BJ (cell line): ENCODE measurements at regions of chr13 and their contacts with region 1.

Region 1: DNA sequence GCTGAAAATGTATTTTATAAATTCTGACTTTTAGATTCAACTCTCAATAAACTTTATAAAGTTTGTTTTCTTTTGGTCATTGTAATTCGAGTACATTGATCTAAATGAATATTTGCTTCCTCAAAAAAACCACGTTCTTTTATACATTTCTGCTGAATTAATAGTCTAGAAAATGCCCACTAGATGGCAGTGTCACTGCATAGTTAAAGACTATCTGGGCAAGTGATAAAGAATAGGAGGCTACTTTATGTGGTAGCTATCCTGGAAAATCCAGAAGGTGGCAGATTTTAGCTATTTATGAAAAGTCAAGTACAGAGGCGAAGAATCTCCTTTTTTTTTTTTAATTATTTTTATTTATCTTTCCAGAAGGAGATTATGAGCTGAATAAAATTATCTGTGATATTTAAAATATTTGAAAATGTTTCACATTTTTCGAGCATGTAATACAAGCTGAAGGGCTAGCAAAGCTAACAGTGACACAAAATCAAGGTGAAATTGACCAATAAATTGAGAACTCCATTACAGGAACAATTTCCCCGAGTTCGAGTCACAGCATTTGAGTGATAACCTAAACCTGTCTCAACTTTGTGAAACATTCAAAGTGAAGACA is 221.8 kb downstream of the OLFM4 start:
- DNase-seq: peak; percentile 1
- H3K4me3 ChIP-seq: no peak overlapping the region
- H3K27me3 ChIP-seq: no peaks in the 10 kb centered on the region
- CTCF ChIP-seq: peak; percentile 70

Region 2: GRCh38 chr13:52070929-52071523 is 1179.3 kb before region 1 on chr13:
- CTCF ChIA-PET with region 1: no interaction called
- POLR2A ChIA-PET with region 1: no interaction called
- DNase-seq: no peak
- H3K4me3 ChIP-seq: no peak overlapping the region
- H3K27me3 ChIP-seq: no peaks in the 10 kb centered on the region
- CTCF ChIP-seq: peak; percentile 18; the same call in 1 of the 2 replicates

Region 3: DNA sequence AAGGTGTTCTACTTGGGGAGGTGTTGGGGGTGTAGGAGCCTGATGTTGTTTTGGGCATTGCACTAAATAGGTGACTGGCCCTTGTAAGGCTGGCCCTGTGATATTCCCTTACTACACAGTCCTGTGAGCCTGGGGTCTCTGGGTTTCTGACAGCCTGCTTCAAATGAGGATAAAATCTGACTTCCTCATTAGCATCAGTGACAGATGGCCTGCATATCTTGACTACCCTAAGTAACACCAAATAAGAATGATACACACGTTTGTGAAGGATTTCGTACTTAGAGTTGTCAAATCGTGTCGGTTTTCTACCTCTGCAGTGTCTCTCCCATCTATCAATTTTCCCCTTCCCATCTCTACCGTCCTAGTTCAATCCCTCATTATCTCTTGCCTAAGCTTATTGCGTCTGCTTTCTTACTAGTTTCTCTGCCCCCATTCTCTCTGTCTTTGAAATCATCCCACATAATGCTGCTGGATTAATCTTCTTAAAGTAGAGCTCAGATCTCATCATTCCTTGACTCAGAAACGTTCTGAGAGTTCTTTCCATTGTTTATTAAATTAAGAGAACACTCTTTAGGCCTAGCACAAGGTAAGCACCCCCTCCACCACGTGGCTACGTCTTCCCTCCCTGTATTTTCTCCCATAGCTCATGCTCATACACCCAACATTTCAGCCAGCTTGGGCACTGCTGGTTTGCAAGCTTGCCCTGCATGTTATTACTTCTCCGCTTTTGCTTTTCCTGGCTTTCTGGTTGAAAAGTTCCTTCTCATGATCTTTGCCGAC is 484.6 kb before region 1 on chr13:
- CTCF ChIA-PET with region 1: no interaction called
- POLR2A ChIA-PET with region 1: no interaction called
- DNase-seq: no peak
- H3K4me3 ChIP-seq: no peak overlapping the region
- H3K27me3 ChIP-seq: no peaks in the 10 kb centered on the region; the same call in 1 of the 2 replicates
- CTCF ChIP-seq: no peak

Region 4: DNA sequence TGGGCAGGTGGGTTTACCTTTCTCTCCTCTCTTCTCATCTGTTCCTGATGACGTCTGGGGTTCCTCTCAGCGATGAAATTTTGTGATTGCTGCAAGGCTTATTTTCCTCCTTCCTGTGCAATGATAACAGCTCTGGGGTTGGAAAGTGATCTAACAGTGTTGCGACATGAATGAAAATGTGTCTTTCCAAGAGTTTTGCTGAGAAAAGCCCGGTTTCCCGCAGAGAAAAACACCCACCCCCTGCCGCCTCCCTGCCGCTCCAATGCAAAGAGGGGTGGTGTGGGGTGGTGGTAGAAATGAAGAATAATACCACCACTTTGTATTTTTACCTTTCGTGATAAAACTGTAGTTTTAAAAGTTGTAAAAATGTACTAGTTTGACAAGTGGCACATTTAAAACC is 10.2 kb after region 1 on chr13:
- CTCF ChIA-PET with region 1: interaction called, 17 read pairs
- POLR2A ChIA-PET with region 1: no interaction called
- DNase-seq: no peak
- H3K4me3 ChIP-seq: no peak overlapping the region
- H3K27me3 ChIP-seq: no peaks in the 10 kb centered on the region
- CTCF ChIP-seq: no peak

Region 5: DNA sequence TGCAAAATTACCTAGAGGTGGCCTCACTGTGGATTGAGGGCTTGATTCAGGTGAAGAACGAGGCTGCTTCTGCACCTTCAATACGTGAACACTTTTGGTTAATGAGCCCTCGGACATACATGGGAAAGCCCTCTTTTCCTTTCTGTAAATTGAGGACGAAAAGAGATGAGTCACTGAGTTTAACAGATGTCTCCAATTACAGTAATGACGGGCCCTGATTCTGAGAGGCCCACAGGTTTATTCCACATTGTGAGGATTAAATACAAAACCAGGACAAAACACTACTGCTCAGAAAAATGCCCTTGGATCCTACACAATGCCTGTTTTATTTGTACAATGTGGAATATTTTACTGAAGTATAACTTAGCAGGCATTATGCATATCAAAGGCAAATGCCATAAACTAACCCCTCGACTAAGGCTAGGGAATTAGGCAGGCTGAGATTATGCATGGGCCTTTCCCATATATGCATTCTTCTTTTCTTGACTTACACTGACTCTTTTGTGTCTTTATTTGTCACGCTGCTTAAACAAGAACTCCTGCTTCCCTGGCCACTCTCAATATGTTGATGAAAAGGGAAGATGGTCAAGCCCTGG is 598.1 kb after region 1 on chr13:
- CTCF ChIA-PET with region 1: no interaction called
- POLR2A ChIA-PET with region 1: no interaction called
- DNase-seq: no peak
- H3K4me3 ChIP-seq: no peak overlapping the region
- H3K27me3 ChIP-seq: no peaks in the 10 kb centered on the region
- CTCF ChIP-seq: no peak